Activated naive CD8-positive, alpha-beta T cell treated with anti-CD3 and anti-CD28 coated beads, Interleukin-2, amount 10 ng/mL, durations not matched to agents 7 days and 5 days (primary cell): ENCODE measurements at regions of chr1 and their contacts with region 1.

Region 1: DNA sequence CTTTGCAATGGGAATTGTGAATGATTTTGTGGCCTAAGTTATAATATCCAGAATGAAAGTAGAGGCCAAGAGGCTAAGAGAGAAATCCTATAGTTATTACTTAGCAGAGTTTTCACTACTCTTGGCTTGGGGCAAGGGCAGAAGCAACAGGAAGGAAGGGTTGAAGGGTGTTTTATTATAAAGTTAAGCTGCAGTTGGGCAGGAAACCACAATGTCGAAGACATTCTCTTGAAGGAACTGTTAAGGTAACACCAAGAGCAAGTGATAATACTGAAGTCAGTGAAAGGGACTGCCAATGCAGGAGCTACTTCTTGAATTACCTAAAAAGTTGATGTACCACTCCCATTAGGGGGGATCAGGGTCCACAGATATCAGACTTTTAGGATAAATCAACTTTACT is 8.3 kb downstream of the XCL2 start:
- DNase-seq: no peak
- ATAC-seq: peak; percentile 87
- H3K4me3 Mint-ChIP-seq: peak overlapping the region; percentile 67
- H3K27ac Mint-ChIP-seq: peak overlapping the region; percentile 92
- H3K4me1 Mint-ChIP-seq: peaks cover 59% of the 10 kb centered on the region
- H3K27me3 Mint-ChIP-seq: peaks cover 2% of the 10 kb centered on the region

Region 2: GRCh38 chr1:168466092-168466713 is 69.3 kb before region 1 on chr1:
- POLR2A ChIA-PET with region 1: interaction called, 13 read pairs
- DNase-seq: no peak
- ATAC-seq: peak; percentile 88
- H3K4me3 Mint-ChIP-seq: peak overlapping the region; percentile 66
- H3K27ac Mint-ChIP-seq: peak overlapping the region; percentile 93
- H3K4me1 Mint-ChIP-seq: peaks cover 68% of the 10 kb centered on the region
- H3K27me3 Mint-ChIP-seq: no peaks in the 10 kb centered on the region

Region 3: DNA sequence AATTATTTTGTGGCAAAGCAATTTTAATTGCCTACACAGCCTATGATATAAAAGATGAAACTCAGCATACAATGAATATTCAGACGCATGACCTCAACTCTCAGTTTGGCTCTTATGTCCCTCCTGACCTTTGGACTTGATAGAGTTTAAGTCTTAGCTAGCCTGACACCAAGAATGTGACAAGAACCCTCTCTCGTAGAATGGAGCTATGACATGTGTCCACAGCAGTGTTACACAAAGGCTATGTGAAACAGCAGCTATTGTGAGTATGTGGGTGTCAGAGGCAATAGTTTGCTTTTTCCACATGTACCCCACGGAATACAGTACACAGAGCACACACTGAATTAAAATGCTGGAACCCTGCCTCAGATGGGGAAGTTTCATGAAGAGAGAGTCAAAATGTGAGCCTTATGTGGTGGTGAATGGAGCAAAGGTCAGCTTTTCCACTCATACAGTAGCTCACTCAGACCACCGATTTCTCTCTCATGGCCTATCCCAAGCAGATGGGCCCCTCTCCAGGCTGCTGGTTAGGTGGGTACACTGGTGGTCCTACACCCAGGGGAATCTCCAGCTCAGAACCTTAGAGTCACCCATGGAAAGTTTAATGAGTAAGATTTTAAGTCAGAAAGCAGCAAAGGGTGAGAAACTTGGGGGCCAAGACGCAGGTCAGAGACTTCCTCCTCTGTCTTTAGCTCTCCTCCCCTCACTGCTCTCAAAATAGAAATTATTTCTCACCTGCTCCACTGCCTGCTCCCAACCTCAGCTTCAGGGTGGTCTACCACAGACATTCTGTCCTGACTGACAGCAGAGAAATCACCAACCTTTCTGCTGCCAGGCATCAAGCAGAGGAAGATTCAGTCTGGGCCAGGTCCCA is 18.4 kb after region 1 on chr1:
- POLR2A ChIA-PET with region 1: interaction called, 10 read pairs
- DNase-seq: no peak
- ATAC-seq: peak; percentile 37
- H3K4me3 Mint-ChIP-seq: peak overlapping the region; percentile 26
- H3K27ac Mint-ChIP-seq: peak overlapping the region; percentile 74
- H3K4me1 Mint-ChIP-seq: peaks cover 52% of the 10 kb centered on the region
- H3K27me3 Mint-ChIP-seq: no peaks in the 10 kb centered on the region